WTC11 (cell line): ENCODE measurements at regions of chrX and their contacts with region 1.

Region 1: DNA sequence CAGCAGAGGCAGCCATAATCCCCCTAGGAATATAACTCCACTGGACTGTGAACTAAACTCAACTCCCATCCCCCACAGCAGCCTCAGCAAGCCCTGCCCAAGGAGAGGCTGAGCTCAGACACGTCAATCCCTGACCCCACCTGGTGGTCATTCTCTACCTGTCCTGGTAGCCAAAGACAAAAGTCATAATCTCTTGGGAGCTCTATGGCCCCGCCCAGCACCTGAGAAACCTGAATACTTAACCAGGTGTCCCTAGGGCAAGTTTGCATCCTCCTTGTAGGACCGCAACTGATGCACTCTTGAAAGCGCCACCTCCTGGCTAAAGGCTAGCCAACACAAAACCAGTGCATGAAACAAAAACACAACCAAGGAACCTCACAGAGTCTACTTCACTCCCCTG is 18.4 kb downstream of the CT47B1 start:
- DNase-seq: peak; percentile 72
- ATAC-seq: peak; percentile 94
- H3K4me3 Mint-ChIP-seq: no peak overlapping the region
- H3K27ac Mint-ChIP-seq: no peak overlapping the region
- H3K4me1 Mint-ChIP-seq: peaks cover 9% of the 10 kb centered on the region
- H3K27me3 Mint-ChIP-seq: peaks cover 75% of the 10 kb centered on the region
- CTCF ChIP-seq: no peak; the same call in 1 of the 2 replicates

Region 2: DNA sequence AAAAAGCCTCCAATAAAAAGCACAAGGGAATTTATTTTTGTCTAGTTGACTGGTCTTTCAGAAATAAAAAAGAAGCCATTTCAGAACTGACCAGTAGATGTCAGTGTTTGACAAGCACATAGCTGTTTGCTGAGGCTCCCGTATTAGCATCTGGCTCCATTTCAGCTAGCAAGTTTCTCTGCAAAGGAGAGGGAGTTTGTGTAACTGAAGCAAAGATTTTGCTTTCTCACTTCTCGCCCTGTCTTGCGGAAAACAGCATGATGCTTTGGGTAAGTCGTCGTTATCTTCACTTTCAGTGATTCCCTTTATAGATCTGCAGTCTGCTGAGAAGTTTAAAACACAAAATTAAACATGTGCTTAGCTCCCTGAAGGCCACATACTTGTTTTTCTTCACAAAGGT is 67.1 kb before region 1 on chrX:
- CTCF ChIA-PET with region 1: interaction called, 60 read pairs
- POLR2A ChIA-PET with region 1: no interaction called
- DNase-seq: no peak
- ATAC-seq: no peak; the same call in 1 of the 2 replicates
- H3K4me3 Mint-ChIP-seq: no peak overlapping the region
- H3K27ac Mint-ChIP-seq: no peak overlapping the region
- H3K4me1 Mint-ChIP-seq: peaks cover 4% of the 10 kb centered on the region; the same call in 1 of the 2 replicates
- H3K27me3 Mint-ChIP-seq: peaks cover 66% of the 10 kb centered on the region
- CTCF ChIP-seq: peak; percentile 39; the same call in 1 of the 2 replicates

Region 3: DNA sequence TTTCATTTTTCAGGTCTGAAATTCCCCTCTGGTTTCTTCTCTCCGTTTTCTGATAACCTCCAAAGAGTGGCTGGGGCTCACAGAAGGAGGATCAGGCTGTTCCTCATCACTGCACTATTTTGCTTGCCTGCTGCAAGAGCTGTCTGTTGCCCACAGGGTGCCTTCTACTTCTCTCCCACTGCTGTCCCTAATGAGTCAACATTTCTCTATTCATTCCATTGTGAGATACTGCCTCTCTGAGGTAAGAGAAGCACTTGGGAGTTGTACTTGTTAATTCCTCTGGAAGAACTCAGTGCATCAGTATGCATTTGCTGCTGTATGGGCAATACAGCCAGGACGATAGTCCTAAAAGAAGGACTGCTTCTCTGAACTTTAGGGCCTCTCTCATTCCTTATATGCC is 16.4 kb before region 1 on chrX:
- CTCF ChIA-PET with region 1: no interaction called
- POLR2A ChIA-PET with region 1: no interaction called
- DNase-seq: no peak
- ATAC-seq: 0 out of 2 replicates have a peak, but pooled peaks have one; percentile 34
- H3K4me3 Mint-ChIP-seq: no peak overlapping the region
- H3K27ac Mint-ChIP-seq: no peak overlapping the region
- H3K4me1 Mint-ChIP-seq: no peaks in the 10 kb centered on the region
- H3K27me3 Mint-ChIP-seq: peaks cover 88% of the 10 kb centered on the region
- CTCF ChIP-seq: no peak